ENCODE measurements at regions of chr1 and their contacts with region 1.

Region 1: DNA sequence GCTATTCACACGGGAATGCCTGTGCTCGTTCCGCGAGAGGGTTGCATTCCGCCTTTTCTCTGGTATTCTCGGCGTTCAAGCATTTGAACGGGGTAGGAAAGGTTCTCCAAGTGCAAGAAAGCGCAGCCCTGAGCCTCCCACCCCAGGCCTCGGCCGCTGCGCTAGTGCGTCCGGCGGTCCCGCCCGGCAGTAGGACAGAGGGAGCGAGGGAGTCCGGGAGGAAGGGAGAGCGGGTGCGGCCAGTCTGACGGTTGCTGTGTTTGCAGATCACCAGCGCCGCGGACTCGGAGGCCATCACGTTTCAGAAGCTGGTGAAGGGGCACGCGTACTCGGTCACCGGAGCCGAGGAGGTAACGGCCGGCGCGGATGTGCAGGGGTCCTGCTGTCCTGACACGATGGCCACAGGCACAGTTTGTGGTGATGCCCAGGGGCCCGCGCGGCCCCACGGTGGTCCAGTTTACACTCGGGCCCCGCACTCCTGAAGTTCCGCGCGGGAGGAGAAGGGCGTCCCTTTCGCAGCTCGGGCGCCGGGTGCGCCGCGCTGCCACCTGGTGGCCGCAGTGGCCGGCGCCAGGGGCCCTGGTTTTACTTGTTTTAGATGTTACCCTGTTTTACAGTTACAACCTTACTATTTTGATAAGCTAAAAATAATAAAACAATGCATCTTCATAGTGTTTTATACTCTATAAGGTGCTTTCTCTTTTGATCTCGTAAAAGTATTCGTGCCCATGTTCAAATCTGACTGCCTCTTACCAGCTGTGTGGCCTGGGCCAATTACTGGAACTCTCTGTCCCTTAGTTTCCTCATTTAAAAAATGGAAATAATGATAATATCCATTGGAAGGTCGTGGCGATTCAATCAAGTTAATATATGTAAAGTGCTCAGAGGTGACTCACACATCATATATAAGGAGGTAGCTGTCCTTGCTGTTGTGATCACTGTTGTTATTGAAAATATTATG is 36.7 kb downstream of the CAPN2 start:
- DNase-seq: peak; percentile 79
- ATAC-seq: peak; percentile 83
- H3K4me3 ChIP-seq: peak overlapping the region; percentile 42 to 69 (median 62)
- H3K4me3 Mint-ChIP-seq: peak overlapping the region; percentile 86
- H3K27ac ChIP-seq: no peak overlapping the region
- H3K27ac Mint-ChIP-seq: peak overlapping the region; percentile 27
- H3K4me1 ChIP-seq: peaks cover 7 to 9% of the 10 kb centered on the region in 2 donors
- H3K4me1 Mint-ChIP-seq: peaks cover 6% of the 10 kb centered on the region
- H3K27me3 ChIP-seq: peaks cover 0 to 5% (median 2%) of the 10 kb centered on the region in 4 experiments
- H3K27me3 Mint-ChIP-seq: no peaks in the 10 kb centered on the region
- CTCF ChIP-seq: peak; percentile 98

Region 2: GRCh38 chr1:223665552-223666312 is 83.3 kb before region 1 on chr1 and contains the start of gene CAPN8:
- CTCF ChIA-PET with region 1: no interaction called
- POLR2A ChIA-PET with region 1: no interaction called
- intact Hi-C with region 1: no loop called
- DNase-seq: no peak
- ATAC-seq: no peak
- H3K4me3 ChIP-seq: no peak within 1 kb of the TSS
- H3K4me3 Mint-ChIP-seq: no peak within 1 kb of the TSS
- H3K27ac ChIP-seq: no peak within 1 kb of the TSS
- H3K27ac Mint-ChIP-seq: no peak within 1 kb of the TSS
- H3K4me1 ChIP-seq: no peaks in the 10 kb centered on the region
- H3K4me1 Mint-ChIP-seq: peaks cover 3% of the 10 kb centered on the region
- H3K27me3 ChIP-seq: peaks cover 0 to 6% (median 1%) of the 10 kb centered on the region in 4 experiments
- H3K27me3 Mint-ChIP-seq: peaks cover 31% of the 10 kb centered on the region
- CTCF ChIP-seq: no peak
- total RNA-seq, gene CAPN8: 0.29 and 0.37 TPM in 2 replicates

Region 3: DNA sequence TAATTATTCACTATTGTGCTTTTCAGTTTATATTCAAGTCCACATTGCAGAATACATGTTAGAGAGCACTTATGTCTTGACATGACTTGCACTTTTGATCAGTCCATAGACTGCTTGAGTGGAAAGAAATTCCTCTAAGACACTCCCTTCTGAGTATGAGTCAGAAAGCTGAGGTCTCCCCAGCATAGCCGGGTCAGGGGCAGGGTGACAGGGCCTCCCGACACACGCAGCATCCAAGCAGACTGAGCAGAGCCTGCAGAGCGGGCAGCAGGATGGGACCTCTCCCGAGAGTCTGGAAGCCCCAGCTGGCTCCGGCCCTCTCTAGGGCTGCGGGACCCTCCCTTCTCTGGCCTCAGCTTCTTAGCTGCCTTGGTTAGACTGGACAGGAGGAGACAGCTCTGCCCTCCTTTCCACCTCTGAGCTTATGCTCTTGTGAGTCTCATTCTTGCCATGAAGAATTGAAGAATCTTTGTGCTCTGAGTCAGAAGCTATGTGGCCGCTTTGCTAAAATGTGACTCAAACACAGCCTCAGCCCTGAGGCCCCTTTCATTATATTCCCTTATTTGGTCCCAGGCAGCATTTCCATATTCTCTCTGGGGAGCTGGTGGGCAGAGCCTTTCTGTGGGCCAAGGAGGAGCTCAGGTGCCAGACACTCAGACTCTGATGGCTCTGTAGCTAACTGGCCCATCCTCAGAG is 48.0 kb before region 1 on chr1:
- CTCF ChIA-PET with region 1: interaction called, 148 read pairs
- POLR2A ChIA-PET with region 1: no interaction called
- intact Hi-C with region 1: loop called (anchors 1 kb)
- DNase-seq: no peak
- ATAC-seq: no peak
- H3K4me3 ChIP-seq: no peak overlapping the region
- H3K4me3 Mint-ChIP-seq: no peak overlapping the region
- H3K27ac ChIP-seq: no peak overlapping the region
- H3K27ac Mint-ChIP-seq: no peak overlapping the region
- H3K4me1 ChIP-seq: peaks cover 4 to 8% of the 10 kb centered on the region in 2 donors
- H3K4me1 Mint-ChIP-seq: peaks cover 8% of the 10 kb centered on the region
- H3K27me3 ChIP-seq: peaks cover 0 to 10% (median 0%) of the 10 kb centered on the region in 4 experiments
- H3K27me3 Mint-ChIP-seq: peaks cover 24% of the 10 kb centered on the region
- CTCF ChIP-seq: no peak

Region 4: GRCh38 chr1:223726380-223727001 is 22.6 kb before region 1 on chr1:
- CTCF ChIA-PET with region 1: interaction called, 26 read pairs
- POLR2A ChIA-PET with region 1: no interaction called
- intact Hi-C with region 1: no loop called
- DNase-seq: peak; percentile 43
- ATAC-seq: peak; percentile 90
- H3K4me3 ChIP-seq: no peak overlapping the region
- H3K4me3 Mint-ChIP-seq: peak overlapping the region; percentile 33
- H3K27ac ChIP-seq: peak overlapping the region; percentile 11 to 37
- H3K27ac Mint-ChIP-seq: peak overlapping the region; percentile 69
- H3K4me1 ChIP-seq: peaks cover 8 to 21% of the 10 kb centered on the region in 2 donors
- H3K4me1 Mint-ChIP-seq: peaks cover 30% of the 10 kb centered on the region
- H3K27me3 ChIP-seq: no peaks in the 10 kb centered on the region
- H3K27me3 Mint-ChIP-seq: no peaks in the 10 kb centered on the region
- CTCF ChIP-seq: no peak

Region 5: GRCh38 chr1:223738465-223739365 is 10.3 kb before region 1 on chr1:
- CTCF ChIA-PET with region 1: interaction called, 23 read pairs
- POLR2A ChIA-PET with region 1: no interaction called
- intact Hi-C with region 1: no loop called
- DNase-seq: no peak
- ATAC-seq: no peak
- H3K4me3 ChIP-seq: no peak overlapping the region
- H3K4me3 Mint-ChIP-seq: no peak overlapping the region
- H3K27ac ChIP-seq: no peak overlapping the region
- H3K27ac Mint-ChIP-seq: no peak overlapping the region
- H3K4me1 ChIP-seq: no peaks in the 10 kb centered on the region
- H3K4me1 Mint-ChIP-seq: no peaks in the 10 kb centered on the region
- H3K27me3 ChIP-seq: no peaks in the 10 kb centered on the region
- H3K27me3 Mint-ChIP-seq: no peaks in the 10 kb centered on the region
- CTCF ChIP-seq: no peak

Region 6: DNA sequence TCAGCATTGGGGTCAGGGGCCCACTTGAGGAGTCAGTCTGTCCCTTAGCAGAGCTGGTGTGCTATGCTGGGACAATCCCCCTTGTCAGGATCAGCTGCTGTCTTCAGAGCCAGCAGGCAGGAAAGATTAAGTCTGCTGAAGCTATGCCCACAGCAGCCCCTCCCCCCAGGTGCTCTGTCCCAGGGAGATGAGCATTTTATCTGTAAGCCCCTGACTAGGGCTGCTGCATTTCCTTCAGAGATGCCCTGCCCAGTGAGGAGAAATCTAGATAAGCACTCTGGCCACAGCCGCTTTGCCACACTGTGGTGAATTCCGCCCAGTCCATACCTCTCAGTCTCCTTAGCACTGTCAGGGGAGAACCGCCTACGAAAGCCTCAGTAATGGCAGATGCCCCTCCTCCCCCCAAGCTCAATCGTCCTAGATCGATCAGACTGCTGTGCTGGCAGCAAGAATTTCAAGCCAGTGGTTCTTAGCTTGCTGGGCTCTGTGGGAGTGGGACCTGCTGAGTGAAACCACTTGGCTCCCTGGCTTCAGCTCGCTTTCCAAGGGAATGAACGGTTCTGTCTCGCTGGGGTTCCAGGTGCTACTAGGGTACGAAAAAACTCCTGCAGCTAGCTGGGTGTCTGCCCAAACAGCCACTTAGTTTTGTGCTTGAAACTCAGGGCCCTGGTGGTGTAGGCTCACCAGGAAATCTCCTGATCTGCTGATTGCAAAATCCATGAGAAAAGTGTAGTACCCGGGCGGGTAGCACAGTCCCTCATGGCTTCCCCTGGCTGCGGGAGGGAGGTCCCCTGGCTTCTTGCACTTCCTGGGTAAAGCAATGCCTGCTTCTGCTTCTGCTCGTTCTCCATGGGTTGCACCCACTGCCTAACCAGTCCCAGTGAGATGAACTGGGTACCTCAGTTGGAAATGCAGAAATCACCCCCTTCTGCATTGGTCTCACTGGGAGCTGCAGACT is 121.8 kb after region 1 on chr1:
- CTCF ChIA-PET with region 1: no interaction called
- POLR2A ChIA-PET with region 1: no interaction called
- intact Hi-C with region 1: no loop called
- DNase-seq: no peak
- ATAC-seq: no peak
- H3K4me3 ChIP-seq: peak overlapping the region in 2 of 5 experiments; percentile 8
- H3K4me3 Mint-ChIP-seq: no peak overlapping the region
- H3K27ac ChIP-seq: no peak overlapping the region
- H3K27ac Mint-ChIP-seq: no peak overlapping the region
- H3K4me1 ChIP-seq: no peaks in the 10 kb centered on the region
- H3K4me1 Mint-ChIP-seq: no peaks in the 10 kb centered on the region
- H3K27me3 ChIP-seq: peaks cover 0 to 22% (median 13%) of the 10 kb centered on the region in 4 experiments
- H3K27me3 Mint-ChIP-seq: peaks cover 41% of the 10 kb centered on the region
- CTCF ChIP-seq: no peak